Gastrocnemius medialis (tissue), 4 donors: ENCODE measurements at regions of chr1 and their contacts with region 1.

Region 1: DNA sequence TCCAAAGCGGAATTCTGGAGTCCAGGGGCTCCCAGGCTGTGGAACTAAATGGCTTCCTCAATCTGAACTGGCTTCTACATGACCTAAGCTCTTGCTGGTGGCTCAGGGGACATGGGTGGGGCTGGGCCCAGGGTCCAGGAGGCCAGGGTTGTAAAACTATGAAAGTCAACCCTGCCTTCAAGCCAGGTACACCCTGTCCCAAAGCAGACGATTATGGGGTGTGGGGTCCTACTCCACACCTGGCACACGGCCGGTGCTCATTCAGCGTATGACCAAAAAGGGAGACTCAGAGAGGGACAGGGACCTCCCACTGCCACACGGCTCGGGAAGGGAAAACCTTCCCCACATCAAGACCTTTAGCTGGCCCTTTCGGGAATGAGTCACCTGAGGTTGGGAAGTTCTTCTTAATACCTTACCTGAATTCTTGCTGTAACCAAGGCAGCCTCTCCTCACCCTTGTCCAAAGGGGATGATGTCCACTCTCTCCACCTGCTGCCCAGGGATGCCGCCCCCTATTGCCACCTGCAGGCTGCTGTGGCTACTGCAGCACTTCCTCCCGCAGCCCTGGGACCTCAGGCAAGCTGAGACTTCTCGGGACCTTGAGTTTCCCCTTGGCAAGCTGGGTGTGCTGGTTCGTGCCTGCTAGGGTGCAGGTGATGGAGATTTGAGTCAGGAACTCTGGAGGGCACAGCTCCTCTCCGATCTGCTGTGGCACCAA is 32.2 kb downstream of the RUNX3 start:
- DNase-seq: no peak
- ATAC-seq: peak in 1 of 2 donors; percentile 33
- H3K4me3 ChIP-seq: no peak overlapping the region
- H3K27ac ChIP-seq: no peak overlapping the region
- H3K4me1 ChIP-seq: no peaks in the 10 kb centered on the region
- H3K27me3 ChIP-seq: no peaks in the 10 kb centered on the region
- CTCF ChIP-seq: peak in 4 of 5 experiments; percentile 32 to 59 (median 54)
- POLR2A ChIP-seq: no peak

Region 2: DNA sequence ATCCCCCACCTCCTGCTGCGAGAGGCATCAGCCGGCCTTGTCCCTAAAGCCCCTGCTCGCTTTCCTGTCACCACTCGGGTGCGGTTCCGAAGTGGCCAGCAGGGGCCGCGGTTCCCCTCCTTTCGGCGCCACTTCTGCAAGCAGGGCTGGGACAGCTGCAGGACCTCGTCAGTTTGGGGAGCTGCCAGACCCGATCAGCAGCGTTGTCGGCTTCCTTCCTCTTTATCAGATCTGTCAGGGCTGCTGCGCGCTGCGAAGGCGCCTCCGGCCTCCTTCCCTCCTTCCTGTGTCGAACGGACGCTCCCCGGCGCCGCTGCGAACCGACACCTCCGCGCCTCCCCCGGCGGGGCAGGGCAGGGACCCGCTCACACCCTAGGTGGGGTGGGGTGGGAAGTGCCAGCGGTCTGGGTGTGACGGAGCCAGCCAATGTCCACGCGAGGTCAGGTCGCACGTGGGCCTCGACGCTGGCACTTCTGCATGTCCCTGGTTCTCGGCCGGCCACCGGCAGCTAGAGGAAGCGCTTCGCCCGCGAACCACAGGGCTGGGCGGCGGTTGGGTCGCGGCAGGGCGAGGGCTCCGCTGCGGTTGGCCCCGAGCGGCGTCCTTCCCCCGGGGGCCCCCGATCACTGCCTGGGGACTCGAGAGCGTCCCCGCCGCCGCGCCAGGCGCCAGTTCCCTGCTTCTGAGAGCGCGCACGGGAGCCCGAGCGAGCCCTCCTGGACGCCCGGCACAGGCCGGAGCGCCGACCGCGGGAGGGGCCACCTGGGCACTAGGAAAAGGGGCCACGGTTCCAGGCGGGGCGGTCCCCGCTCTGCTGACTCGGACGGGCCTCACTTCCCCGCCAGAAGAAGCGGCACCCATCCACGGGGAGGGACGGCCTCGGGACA is 49.7 kb before region 1 on chr1:
- in situ Hi-C with region 1: no loop called
- intact Hi-C with region 1: loop called (anchors 5 kb)
- DNase-seq: peak; percentile 79 to 81
- ATAC-seq: peak; percentile 93 to 94
- H3K4me3 ChIP-seq: peak overlapping the region; percentile 54 to 67 (median 61)
- H3K27ac ChIP-seq: peak overlapping the region in 3 of 4 donors; percentile 15 to 55 (median 36)
- H3K4me1 ChIP-seq: no peaks in the 10 kb centered on the region
- H3K27me3 ChIP-seq: no peaks in the 10 kb centered on the region
- CTCF ChIP-seq: peak; percentile 73 to 95 (median 91)
- POLR2A ChIP-seq: no peak

Region 3: GRCh38 chr1:24946861-24947658 is 49.1 kb after region 1 on chr1:
- in situ Hi-C with region 1: no loop called
- intact Hi-C with region 1: no loop called
- DNase-seq: no peak
- ATAC-seq: no peak
- H3K4me3 ChIP-seq: no peak overlapping the region
- H3K27ac ChIP-seq: no peak overlapping the region
- H3K4me1 ChIP-seq: no peaks in the 10 kb centered on the region
- H3K27me3 ChIP-seq: no peaks in the 10 kb centered on the region
- CTCF ChIP-seq: no peak
- POLR2A ChIP-seq: no peak

Region 4: GRCh38 chr1:25529518-25530185 is 631.7 kb after region 1 on chr1:
- in situ Hi-C with region 1: no loop called
- intact Hi-C with region 1: no loop called
- DNase-seq: no peak
- ATAC-seq: no peak
- H3K4me3 ChIP-seq: no peak overlapping the region
- H3K27ac ChIP-seq: no peak overlapping the region
- H3K4me1 ChIP-seq: peaks cover 0 to 8% of the 10 kb centered on the region in 2 donors
- H3K27me3 ChIP-seq: no peaks in the 10 kb centered on the region
- CTCF ChIP-seq: no peak
- POLR2A ChIP-seq: no peak